Astrocyte of the cerebellum (primary cell): ENCODE measurements at regions of chr7 and their contacts with region 1.

Region 1: GRCh38 chr7:74417419-74417971 is 36.2 kb upstream of the GTF2IRD1 start:
- DNase-seq: peak; percentile 39
- H3K4me3 ChIP-seq: no peak overlapping the region
- CTCF ChIP-seq: peak; percentile 89

Region 2: DNA sequence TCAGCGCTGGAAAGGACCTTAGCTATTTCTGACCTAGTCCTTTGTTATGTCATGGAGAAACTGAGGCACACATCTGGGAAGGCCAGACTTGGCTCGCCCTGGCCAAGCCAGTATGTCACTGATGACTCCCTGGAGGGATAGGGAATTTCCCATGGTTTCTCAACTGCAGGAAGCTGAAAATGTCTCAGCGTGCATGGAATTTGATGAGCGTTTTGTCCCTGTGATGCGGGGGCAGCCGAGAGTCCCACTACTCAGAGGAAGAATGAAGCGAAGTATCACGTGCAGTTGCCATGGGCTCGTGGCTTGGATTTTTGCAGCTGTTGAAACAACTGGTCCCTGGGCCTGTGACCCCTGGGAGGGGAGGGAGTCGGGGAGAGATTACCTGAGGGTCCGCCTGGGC is 83.5 kb before region 1 on chr7:
- in situ Hi-C with region 1: no loop called
- DNase-seq: no peak
- H3K4me3 ChIP-seq: no peak overlapping the region
- CTCF ChIP-seq: no peak

Region 3: GRCh38 chr7:74479961-74480829 is 62.7 kb after region 1 on chr7:
- in situ Hi-C with region 1: no loop called
- DNase-seq: peak; percentile 67
- H3K4me3 ChIP-seq: peak overlapping the region; percentile 23
- CTCF ChIP-seq: no peak

Region 4: DNA sequence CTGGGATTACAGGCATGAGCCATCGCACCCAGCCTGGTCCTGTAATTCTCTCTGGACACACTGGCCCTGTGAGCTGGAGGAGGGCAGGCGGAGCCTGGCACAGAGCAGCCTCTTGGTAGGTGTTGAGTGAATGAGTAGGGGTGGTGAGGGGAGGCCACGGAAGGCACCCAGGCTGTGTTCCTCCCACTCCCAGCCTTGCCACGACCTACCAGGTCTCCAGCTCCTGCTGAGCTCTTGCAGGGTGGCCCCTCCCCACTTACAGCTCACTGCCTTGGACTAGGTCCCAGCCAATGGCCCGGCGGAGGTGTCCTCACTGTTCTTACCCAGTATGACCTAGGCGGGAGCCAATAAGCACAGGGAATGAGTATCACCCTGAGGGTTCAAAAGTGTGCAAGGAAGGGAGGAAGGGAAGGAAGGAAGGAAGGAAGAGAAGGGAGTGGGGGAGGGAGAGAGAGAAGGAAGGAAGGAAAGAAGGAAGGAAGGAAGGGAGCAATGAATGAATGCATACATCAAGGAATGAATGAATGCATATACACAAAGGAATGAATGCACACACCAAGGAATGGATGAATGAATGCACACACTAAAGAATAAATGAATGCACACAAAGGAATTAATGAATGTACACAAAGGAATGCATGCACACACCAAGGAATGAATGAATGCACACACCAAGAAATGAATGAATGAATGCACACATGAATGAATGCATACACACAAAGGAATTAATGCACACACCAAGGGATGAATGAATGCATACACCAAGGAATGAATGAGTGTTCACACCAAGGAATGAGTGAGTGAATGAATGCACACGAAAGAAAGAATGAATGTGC is 81.7 kb after region 1 on chr7:
- in situ Hi-C with region 1: loop called (anchors 5 kb)
- DNase-seq: no peak
- H3K4me3 ChIP-seq: no peak overlapping the region
- CTCF ChIP-seq: no peak

Region 5: DNA sequence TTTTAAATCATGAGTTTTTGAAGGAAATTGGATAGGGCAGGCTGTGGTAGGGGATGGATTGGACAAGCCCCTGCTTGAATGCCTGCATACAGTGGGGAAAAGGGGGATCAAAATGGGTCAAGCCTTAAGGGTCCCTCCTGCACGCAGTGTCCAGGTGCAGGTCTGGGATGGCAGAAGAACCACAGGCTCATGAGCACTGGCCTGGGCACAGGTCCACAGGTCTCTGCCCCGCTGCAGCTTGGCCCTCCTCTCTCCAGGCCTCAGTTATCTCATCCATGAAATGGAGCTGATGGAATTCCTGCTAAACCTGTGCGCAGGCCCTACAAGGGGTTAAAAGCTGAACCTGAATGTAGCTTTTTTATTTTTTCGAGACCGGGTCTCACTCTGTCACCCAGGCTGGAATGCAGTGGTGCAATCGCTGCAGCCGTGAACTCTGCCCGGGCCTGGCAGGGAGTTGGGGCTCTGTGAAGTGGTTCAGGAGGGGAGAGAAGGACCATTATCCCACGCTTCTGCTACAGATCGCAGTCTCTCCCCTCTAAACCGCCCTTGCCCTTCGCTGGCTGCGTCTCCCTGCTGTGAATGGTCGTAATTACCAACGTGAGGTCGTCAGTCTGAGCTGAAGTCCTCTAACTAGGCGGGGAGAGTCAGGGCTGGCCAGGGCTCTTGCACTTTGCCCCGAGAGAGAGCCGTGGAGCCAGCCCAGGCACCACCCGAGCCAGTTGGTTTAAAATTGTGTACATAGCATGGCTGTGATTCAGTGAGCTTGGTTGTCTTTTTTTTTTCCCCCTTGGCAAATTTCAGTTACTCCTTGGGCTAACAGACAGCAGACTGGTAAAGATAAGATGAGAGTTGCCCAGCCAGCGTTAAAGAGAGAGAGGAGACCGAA is 162.5 kb after region 1 on chr7:
- in situ Hi-C with region 1: loop called (anchors 5 kb)
- DNase-seq: no peak
- H3K4me3 ChIP-seq: no peak overlapping the region
- CTCF ChIP-seq: no peak

Region 6: GRCh38 chr7:74674166-74674565 is 256.7 kb after region 1 on chr7:
- in situ Hi-C with region 1: no loop called
- DNase-seq: no peak
- H3K4me3 ChIP-seq: no peak overlapping the region
- CTCF ChIP-seq: no peak